ENCODE measurements at regions of chr1 and their contacts with region 1.

Region 1: GRCh38 chr1:67214420-67215174 is 48.3 kb downstream of the IL23R start:
- DNase-seq: peak; percentile 75
- H3K4me3 Mint-ChIP-seq: no peak overlapping the region
- H3K27ac Mint-ChIP-seq: no peak overlapping the region
- H3K4me1 Mint-ChIP-seq: peaks cover 44% of the 10 kb centered on the region
- H3K27me3 Mint-ChIP-seq: no peaks in the 10 kb centered on the region

Region 2: DNA sequence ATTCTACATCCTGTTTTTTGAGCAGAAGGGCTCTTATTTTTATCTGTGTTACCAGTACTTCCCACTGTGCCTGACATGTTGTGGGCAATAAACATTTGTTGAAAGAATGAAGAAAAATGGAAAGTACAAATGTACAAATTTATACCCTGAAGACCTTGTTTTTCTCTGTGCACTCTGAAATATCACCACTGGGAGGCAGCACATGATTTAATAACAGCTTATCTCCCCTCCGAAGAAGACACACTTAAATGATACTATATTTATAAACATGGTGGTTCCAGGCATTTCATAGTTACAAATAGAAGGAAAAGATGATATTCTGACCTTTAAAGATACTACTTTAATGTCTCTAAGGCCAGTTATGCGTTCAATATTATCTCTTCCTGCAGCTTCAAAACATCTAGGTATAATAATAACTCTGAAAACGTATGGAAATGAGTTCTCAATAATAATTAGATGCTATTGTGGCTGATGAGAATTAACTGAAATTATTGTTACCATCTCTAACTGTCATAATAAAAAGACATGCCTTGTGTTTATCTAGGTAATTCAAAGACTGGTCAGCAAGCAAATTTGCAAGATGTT is 449.5 kb before region 1 on chr1:
- CTCF ChIA-PET with region 1: interaction called, 40 read pairs
- DNase-seq: peak; percentile 68
- H3K4me3 Mint-ChIP-seq: no peak overlapping the region
- H3K27ac Mint-ChIP-seq: no peak overlapping the region
- H3K4me1 Mint-ChIP-seq: peaks cover 16% of the 10 kb centered on the region
- H3K27me3 Mint-ChIP-seq: no peaks in the 10 kb centered on the region

Region 3: DNA sequence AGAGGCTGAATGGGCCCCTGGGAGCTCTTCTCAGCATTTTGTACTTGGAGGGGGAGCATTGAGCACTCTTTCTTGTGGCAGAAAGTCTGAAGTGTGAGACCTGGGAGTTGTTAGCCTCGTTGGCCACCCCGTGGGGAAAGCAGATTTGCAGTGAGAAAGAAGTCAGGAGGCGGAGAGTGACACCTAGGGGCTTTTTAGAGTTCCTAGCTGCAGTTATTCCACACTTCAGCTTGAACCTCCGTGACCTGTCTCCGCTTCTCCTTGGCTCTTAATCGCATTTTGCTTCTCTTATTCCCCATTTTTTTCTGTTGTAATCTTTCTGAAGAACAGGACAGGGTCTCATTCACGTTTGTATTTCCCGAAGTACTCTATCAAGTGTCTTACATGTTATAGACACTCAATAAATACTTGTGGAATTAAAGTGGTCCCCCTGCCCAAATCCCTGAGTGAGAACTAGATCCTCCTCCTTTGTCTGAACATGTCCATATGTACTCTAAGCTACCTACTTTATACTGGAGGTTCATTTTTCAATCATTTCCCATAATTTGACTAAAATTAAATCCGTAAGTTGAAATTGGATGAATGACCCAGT is 65.3 kb before region 1 on chr1:
- CTCF ChIA-PET with region 1: interaction called, 317 read pairs
- DNase-seq: peak; percentile 76
- H3K4me3 Mint-ChIP-seq: no peak overlapping the region
- H3K27ac Mint-ChIP-seq: no peak overlapping the region
- H3K4me1 Mint-ChIP-seq: peaks cover 27% of the 10 kb centered on the region
- H3K27me3 Mint-ChIP-seq: no peaks in the 10 kb centered on the region

Region 4: DNA sequence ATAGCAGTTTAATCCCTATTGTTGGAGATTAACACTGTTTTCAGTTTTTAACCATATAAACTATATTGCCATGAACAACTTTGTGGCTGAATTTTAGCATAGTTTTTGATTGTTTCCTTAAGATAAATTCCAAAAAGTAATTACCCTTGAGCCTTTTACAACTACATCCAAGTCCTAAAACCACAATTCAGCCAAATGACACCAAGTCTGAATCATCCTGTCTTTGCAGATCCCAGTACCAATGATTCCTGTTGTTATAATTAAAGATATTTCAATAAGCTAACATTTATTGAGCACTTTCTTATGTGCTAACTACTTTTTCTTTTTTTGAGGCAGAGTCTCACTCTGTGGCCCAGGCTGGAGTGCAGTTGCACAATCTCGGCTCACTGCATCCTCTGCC is 12.7 kb before region 1 on chr1:
- CTCF ChIA-PET with region 1: interaction called, 34 read pairs
- DNase-seq: no peak
- H3K4me3 Mint-ChIP-seq: no peak overlapping the region
- H3K27ac Mint-ChIP-seq: no peak overlapping the region
- H3K4me1 Mint-ChIP-seq: no peaks in the 10 kb centered on the region
- H3K27me3 Mint-ChIP-seq: peaks cover 6% of the 10 kb centered on the region

Region 5: GRCh38 chr1:67332653-67333529 is 118.3 kb after region 1 on chr1:
- CTCF ChIA-PET with region 1: interaction called, 19 read pairs
- DNase-seq: peak; percentile 43
- H3K4me3 Mint-ChIP-seq: peak overlapping the region; percentile 21
- H3K27ac Mint-ChIP-seq: peak overlapping the region; percentile 89
- H3K4me1 Mint-ChIP-seq: peaks cover 75% of the 10 kb centered on the region
- H3K27me3 Mint-ChIP-seq: no peaks in the 10 kb centered on the region

Region 6: DNA sequence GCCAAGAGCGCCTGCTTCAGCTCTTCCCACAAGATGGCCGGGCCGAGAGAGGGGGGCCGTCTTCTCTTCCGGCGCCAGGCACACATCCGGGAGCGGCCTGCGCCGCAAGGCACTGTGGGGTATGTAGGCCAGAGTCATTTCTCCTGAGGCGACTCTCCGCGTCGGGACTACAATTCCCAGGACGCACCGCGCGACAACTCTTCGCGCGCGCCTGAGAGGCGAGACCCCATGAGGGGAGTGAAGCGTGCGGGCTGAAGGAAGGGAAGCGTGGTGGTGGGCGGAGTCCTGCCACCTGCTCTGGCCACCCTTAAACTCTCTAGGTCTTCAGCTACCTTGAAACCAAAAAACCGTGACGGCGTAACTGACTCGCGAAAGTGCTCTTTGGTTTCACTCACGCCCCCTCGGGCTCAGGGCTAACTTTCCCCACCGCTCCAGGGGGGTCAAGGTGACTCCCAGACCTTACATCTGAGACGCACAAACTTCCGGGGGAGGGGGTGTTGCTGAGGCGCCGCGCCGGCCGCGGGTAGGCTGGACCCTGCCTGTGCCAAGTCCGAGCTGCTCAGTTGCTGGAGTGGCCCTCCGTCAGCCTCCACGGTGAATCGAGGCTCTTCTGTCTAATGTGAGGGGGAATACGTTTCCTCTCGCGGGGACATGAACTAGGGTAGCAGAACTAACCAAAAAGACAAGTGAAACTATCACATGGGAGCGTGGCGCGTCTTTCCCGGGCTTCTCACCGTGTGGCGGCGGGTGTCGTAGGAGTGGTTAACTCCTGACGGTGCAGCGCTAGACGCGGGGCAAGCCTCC is 216.0 kb after region 1 on chr1 and contains the start of gene SERBP1:
- CTCF ChIA-PET with region 1: interaction called, 22 read pairs
- DNase-seq: peak; percentile 97
- H3K4me3 Mint-ChIP-seq: peak within 1 kb of the TSS; percentile 77
- H3K27ac Mint-ChIP-seq: peak within 1 kb of the TSS; percentile 93
- H3K4me1 Mint-ChIP-seq: peaks cover 58% of the 10 kb centered on the region
- H3K27me3 Mint-ChIP-seq: no peaks in the 10 kb centered on the region